ENCODE measurements at regions of chr5 and their contacts with region 1.

Region 1: DNA sequence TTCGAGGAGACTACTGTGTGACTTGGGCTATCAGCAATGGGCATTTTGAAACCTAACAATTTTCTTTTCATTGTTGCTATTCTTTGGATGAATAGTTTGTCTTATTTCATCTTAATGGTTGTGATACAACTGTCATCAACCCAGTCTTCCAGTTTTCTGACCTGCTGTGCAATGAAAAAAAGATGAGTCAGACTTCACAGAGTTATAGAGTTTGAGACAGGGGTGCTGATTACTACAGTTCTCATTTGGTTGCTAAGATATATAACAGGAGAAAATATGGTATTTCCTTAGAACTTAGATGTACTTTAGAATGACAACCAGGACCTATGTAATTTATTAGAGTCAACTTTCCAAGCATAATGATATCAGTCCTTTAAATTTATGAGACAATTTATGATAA is 564.4 kb upstream of the NUDT12 start:
- DNase-seq: no peak
- ATAC-seq: no peak
- H3K4me3 ChIP-seq: no peak overlapping the region
- H3K27ac ChIP-seq: no peak overlapping the region
- H3K4me1 ChIP-seq: no peaks in the 10 kb centered on the region
- H3K27me3 ChIP-seq: no peaks in the 10 kb centered on the region
- CTCF ChIP-seq: no peak
- POLR2A ChIP-seq: no peak
- RAD21 ChIP-seq: no peak

Region 2: GRCh38 chr5:104001136-104001535 is 125.8 kb before region 1 on chr5:
- CTCF ChIA-PET with region 1: no interaction called
- POLR2A ChIA-PET with region 1: no interaction called
- dilution Hi-C with region 1: no loop called
- in situ Hi-C with region 1: no loop called
- intact Hi-C with region 1: loop called (anchors 10 kb)
- DNase-seq: no peak
- ATAC-seq: no peak
- H3K4me3 ChIP-seq: no peak overlapping the region
- H3K27ac ChIP-seq: no peak overlapping the region
- H3K4me1 ChIP-seq: no peaks in the 10 kb centered on the region
- H3K27me3 ChIP-seq: no peaks in the 10 kb centered on the region
- CTCF ChIP-seq: no peak
- POLR2A ChIP-seq: no peak
- RAD21 ChIP-seq: no peak

Measured in IMR-90 (cell line).